GM12878 (cell line): ENCODE measurements at regions of chr11 and their contacts with region 1.

Region 1: GRCh38 chr11:62591448-62592145 is at the start of gene TUT1:
- DNase-seq: peak; percentile 98
- ATAC-seq: peak; percentile 93
- H3K4me3 ChIP-seq: peak within 1 kb of the TSS; percentile 99
- H3K27ac ChIP-seq: peak within 1 kb of the TSS; percentile 76
- H3K4me1 ChIP-seq: peaks cover 8% of the 10 kb centered on the region
- H3K27me3 ChIP-seq: no peaks in the 10 kb centered on the region
- CTCF ChIP-seq: no peak
- EP300 ChIP-seq: peak in 1 of 2 experiments; percentile 36; a peak in 1 of 4 replicates
- POLR2A ChIP-seq: peak; percentile 97
- RAD21 ChIP-seq: no peak
- polyA plus RNA-seq, gene TUT1: 1.1 to 1.4 TPM

Region 2: GRCh38 chr11:62394825-62395538 is 196.6 kb before region 1 on chr11:
- CTCF ChIA-PET with region 1: interaction called, 18 read pairs
- POLR2A ChIA-PET with region 1: no interaction called
- RAD21 ChIA-PET with region 1: no interaction called
- SMC1A ChIA-PET with region 1: interaction called, 7 read pairs
- in situ Hi-C with region 1: no loop called
- intact Hi-C with region 1: no loop called
- DNase-seq: peak; percentile 28
- ATAC-seq: peak; percentile 97
- H3K4me3 ChIP-seq: no peak overlapping the region
- H3K27ac ChIP-seq: no peak overlapping the region
- H3K4me1 ChIP-seq: no peaks in the 10 kb centered on the region
- H3K27me3 ChIP-seq: no peaks in the 10 kb centered on the region
- CTCF ChIP-seq: peak; percentile 51 to 82 (median 68); a peak in 5 of 6 replicates
- EP300 ChIP-seq: no peak
- POLR2A ChIP-seq: no peak
- RAD21 ChIP-seq: peak; percentile 86

Region 3: DNA sequence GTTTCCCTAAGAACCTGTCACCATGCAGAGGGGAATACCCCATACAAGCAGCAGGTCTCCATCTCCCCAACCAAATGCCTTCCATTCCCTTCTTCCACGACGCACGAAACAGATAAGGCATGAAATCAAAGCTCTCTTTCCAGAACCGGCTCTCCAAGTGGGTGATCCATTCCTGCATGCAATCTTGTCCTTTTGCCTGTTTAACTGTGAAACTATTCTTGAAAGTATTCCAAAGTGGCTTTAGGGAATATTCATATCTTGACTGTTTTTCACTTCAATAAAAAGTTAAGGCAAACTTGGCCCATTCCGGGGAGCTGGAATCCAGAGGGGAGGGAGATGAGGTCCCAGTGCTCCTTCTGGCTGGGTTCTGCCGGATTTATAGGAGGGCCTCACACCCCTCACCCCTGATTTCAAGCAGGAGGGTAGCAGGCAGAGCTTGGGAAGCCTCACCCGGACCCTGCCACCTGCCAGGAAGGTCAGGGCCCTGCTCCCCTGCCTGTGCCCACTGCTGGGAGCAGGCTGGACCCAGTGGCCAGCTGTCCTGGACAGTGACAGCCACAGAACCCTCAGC is 111.9 kb before region 1 on chr11:
- CTCF ChIA-PET with region 1: no interaction called
- POLR2A ChIA-PET with region 1: no interaction called
- RAD21 ChIA-PET with region 1: no interaction called
- SMC1A ChIA-PET with region 1: no interaction called
- in situ Hi-C with region 1: no loop called
- intact Hi-C with region 1: no loop called
- DNase-seq: no peak
- ATAC-seq: no peak
- H3K4me3 ChIP-seq: no peak overlapping the region
- H3K27ac ChIP-seq: no peak overlapping the region
- H3K4me1 ChIP-seq: no peaks in the 10 kb centered on the region
- H3K27me3 ChIP-seq: no peaks in the 10 kb centered on the region; a peak in 1 of 4 replicates
- CTCF ChIP-seq: no peak
- EP300 ChIP-seq: no peak
- POLR2A ChIP-seq: no peak
- RAD21 ChIP-seq: no peak

Region 4: DNA sequence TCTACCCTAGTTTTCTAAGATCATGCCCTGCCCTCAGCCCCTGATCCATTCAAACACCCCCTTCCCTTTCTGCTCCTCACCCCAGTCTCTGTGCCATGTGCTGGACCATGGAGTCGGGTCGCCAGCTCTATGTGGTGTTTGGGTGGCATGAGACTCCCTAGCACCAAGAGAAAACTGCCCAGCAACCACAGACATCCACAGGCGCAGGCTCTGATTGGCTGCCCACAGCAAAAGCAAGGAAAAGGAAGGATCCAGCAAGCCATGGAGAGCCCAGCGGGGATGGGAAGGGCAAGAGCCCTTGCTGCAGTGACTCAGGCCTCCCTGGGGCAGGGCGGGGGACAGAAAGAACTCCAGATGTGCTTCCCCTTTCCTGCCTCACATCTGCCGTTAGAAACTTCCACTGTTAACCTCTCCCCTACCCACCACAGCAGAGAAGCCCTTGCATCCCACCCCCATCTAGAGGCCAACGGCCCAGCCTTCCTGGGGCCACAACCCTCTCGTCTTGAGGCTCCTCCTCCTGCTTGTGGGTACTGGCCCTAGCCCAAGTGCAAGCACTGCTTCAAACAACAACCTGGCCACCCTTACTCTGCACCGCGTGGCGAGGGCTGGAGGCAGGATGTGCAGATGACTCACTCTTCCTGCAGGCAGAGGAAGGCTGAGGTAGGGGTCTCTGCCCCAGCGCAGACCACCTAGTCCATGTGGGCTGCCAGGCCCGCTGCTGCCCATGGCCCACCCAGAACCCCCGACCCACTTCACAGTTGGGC is 35.3 kb before region 1 on chr11:
- CTCF ChIA-PET with region 1: interaction called, 14 read pairs
- POLR2A ChIA-PET with region 1: interaction called, 5 read pairs
- RAD21 ChIA-PET with region 1: interaction called, 12 read pairs
- SMC1A ChIA-PET with region 1: interaction called, 10 read pairs
- in situ Hi-C with region 1: no loop called
- intact Hi-C with region 1: no loop called
- DNase-seq: peak; percentile 88
- ATAC-seq: peak; percentile 74
- H3K4me3 ChIP-seq: peak overlapping the region; percentile 42
- H3K27ac ChIP-seq: peak overlapping the region; percentile 99
- H3K4me1 ChIP-seq: peaks cover 88% of the 10 kb centered on the region
- H3K27me3 ChIP-seq: no peaks in the 10 kb centered on the region
- CTCF ChIP-seq: no peak
- EP300 ChIP-seq: peak in 1 of 2 experiments; percentile 11; a peak in 1 of 4 replicates
- POLR2A ChIP-seq: peak; percentile 66; the same call in 1 of the 2 replicates
- RAD21 ChIP-seq: no peak

Region 5: DNA sequence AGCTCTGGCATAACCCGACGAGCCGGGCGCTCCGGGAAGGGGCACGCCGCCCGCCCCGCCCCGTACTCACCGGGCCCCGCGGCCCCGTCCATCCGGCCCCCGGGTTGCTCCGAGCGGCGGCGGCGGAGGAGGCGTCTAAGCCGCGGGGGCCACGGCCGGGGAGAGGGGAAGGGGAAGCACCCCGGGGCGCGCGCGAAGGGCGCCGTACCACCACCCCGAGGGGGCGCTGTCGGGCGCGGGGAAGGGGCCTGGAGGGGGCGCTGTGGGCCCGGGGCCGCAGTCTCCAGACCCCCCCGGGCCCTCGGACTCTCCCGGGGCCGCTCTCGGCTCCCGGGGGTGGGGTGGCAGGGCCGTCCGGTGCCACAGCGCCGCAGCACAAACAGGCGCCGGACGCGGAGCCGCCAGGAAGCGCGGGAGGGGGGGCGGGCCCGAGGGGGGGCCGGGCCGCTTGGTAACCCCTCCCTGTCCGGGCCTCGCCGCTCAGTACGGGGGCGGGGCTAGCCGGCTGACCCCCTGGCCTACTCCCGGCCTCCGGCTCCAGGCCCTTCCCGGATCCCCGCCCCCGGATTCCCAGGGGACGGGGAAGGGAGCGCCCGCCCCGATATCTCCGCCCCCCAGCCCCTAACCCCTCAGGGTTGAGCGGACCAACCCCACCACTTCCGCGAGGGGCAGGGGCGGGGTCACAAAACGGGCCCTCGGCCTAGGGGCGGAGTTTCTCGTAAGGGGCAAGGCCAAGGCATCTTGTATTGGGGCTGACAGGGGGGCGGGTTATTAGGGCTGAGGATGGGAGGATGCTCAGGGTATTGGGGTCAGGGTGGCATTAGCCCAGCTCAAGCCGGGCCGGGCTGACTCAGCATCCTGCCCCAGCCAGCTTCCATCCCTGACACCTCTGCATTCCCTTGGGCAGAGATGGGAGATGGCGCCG is 21.0 kb after region 1 on chr11 and contains the starts of genes EML3 and ROM1:
- CTCF ChIA-PET with region 1: interaction called, 41 read pairs
- POLR2A ChIA-PET with region 1: interaction called, 8 read pairs
- RAD21 ChIA-PET with region 1: interaction called, 9 read pairs
- SMC1A ChIA-PET with region 1: interaction called, 19 read pairs
- in situ Hi-C with region 1: no loop called
- intact Hi-C with region 1: no loop called
- DNase-seq: no peak
- ATAC-seq: peak; percentile 88
- H3K4me3 ChIP-seq: peak within 1 kb of the TSS; percentile 94
- H3K27ac ChIP-seq: peak within 1 kb of the TSS; percentile 81
- H3K4me1 ChIP-seq: peaks cover 12% of the 10 kb centered on the region
- H3K27me3 ChIP-seq: no peaks in the 10 kb centered on the region
- CTCF ChIP-seq: peak; percentile 76 to 99 (median 92)
- EP300 ChIP-seq: no peak
- POLR2A ChIP-seq: 0 out of 2 replicates have a peak, but pooled peaks have one; percentile 50
- RAD21 ChIP-seq: peak; percentile 36; the same call in 1 of the 2 replicates
- polyA plus RNA-seq, gene EML3: 0.58 to 1.2 TPM
- polyA plus RNA-seq, gene ROM1: 0.42 TPM

Region 6: GRCh38 chr11:62671575-62672389 is 80.2 kb after region 1 on chr11 and contains the starts of genes LBHD1 and UQCC3:
- CTCF ChIA-PET with region 1: interaction called, 10 read pairs
- POLR2A ChIA-PET with region 1: interaction called, 17 read pairs
- RAD21 ChIA-PET with region 1: interaction called, 14 read pairs
- SMC1A ChIA-PET with region 1: interaction called, 9 read pairs
- in situ Hi-C with region 1: no loop called
- intact Hi-C with region 1: loop called (anchors 2 kb)
- DNase-seq: no peak
- ATAC-seq: peak; percentile 89
- H3K4me3 ChIP-seq: peak within 1 kb of the TSS; percentile 88
- H3K27ac ChIP-seq: peak within 1 kb of the TSS; percentile 75
- H3K4me1 ChIP-seq: peaks cover 19% of the 10 kb centered on the region
- H3K27me3 ChIP-seq: no peaks in the 10 kb centered on the region
- CTCF ChIP-seq: no peak
- EP300 ChIP-seq: no peak
- POLR2A ChIP-seq: peak; percentile 82
- RAD21 ChIP-seq: no peak
- polyA plus RNA-seq, gene LBHD1: 0.79 to 2.4 TPM
- polyA plus RNA-seq, gene UQCC3: 2.0 to 4.6 TPM

Region 7: DNA sequence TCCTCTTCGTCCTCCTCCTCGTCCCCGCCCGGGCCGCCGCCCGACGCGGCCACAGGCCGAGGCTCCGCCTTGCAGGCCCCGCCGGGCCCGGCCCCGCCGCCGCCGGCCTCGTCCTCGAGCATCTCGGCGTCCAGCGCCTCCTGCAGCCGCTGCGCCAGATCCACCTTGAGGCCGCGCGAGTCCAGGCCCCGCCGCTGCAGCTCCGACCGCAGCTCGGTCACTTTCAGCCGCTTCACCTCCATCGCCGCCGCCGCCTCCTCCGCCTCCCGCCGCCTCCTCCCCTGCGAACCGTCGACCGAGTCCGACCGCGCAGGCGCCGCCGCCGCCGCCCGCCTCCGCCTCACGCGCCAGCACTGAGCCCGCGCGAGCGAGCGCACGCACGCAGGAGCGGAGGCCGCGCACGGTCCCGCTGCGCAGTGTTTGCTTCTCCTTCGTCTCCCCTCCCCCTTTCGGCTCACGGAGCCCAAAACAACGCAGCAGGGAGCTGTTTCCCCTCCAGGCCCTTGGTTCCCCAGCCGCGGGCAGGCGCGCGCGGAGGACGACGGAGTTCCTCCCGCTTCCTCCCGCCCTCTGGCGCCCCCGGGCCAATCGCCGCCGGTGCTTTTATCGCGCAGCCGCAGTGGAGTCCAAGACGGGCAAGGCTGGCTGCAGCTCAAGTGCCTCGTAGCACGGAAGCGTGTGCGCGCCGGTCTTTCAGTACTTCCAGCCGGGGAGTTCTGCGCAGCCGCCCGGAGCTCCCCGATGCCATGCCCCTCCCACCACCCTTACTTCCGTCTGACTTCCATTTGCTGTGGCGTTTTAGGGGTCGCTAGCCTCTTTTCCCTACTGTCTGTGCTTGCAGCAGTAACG is 135.5 kb after region 1 on chr11 and contains the start of gene HNRNPUL2:
- CTCF ChIA-PET with region 1: no interaction called
- POLR2A ChIA-PET with region 1: interaction called, 13 read pairs
- RAD21 ChIA-PET with region 1: interaction called, 7 read pairs
- SMC1A ChIA-PET with region 1: interaction called, 5 read pairs
- in situ Hi-C with region 1: no loop called
- intact Hi-C with region 1: no loop called
- DNase-seq: peak; percentile 95
- ATAC-seq: peak; percentile 90
- H3K4me3 ChIP-seq: peak within 1 kb of the TSS; percentile 100
- H3K27ac ChIP-seq: peak within 1 kb of the TSS; percentile 94
- H3K4me1 ChIP-seq: no peaks in the 10 kb centered on the region; the same call in 1 of the 2 replicates
- H3K27me3 ChIP-seq: no peaks in the 10 kb centered on the region
- CTCF ChIP-seq: no peak
- EP300 ChIP-seq: no peak
- POLR2A ChIP-seq: peak; percentile 96
- RAD21 ChIP-seq: no peak
- polyA plus RNA-seq, gene HNRNPUL2: 1.6 to 7.4 TPM

Region 8: DNA sequence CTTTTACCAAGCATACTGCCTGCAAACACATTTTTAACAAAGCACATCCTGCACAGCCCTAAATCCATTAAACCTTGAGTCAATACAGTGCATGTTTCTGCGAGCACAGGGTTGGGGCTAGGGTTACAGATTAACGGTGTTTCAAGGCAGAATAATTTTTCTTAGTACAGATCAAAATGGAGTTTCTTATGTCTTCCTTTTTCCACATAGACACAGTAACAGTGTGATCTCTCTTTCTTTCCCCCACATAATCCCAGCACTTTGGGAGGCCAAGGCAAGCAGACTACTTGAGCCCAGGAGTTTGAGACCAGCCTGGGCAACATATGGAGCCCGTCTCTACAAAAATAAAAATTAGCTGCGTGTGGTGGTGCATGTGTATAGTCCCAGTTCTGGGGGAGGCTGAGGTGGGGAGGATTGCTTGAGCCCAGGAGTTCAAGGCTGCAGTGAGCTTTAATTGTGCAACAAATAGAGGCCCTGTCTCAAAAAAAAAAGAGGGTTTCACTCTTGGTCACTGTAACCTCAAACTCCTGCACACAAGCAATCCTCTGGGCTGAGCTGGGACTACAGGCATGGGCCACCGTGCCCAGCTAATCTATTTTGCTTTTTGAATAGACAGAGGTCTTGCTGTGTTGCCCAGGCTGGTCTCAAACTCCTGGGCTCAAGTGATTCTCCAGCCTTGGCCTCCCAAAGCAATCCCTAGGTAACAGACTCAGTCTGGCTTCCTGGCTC is 269.4 kb after region 1 on chr11:
- CTCF ChIA-PET with region 1: interaction called, 23 read pairs
- POLR2A ChIA-PET with region 1: interaction called, 3 read pairs
- RAD21 ChIA-PET with region 1: interaction called, 3 read pairs
- SMC1A ChIA-PET with region 1: interaction called, 4 read pairs
- in situ Hi-C with region 1: no loop called
- intact Hi-C with region 1: loop called (anchors 5 kb)
- DNase-seq: no peak
- ATAC-seq: peak; percentile 72
- H3K4me3 ChIP-seq: peak overlapping the region; percentile 28; the same call in 1 of the 2 replicates
- H3K27ac ChIP-seq: peak overlapping the region; percentile 61
- H3K4me1 ChIP-seq: peaks cover 23% of the 10 kb centered on the region
- H3K27me3 ChIP-seq: no peaks in the 10 kb centered on the region
- CTCF ChIP-seq: no peak
- EP300 ChIP-seq: no peak
- POLR2A ChIP-seq: no peak
- RAD21 ChIP-seq: no peak